Right ventricle myocardium superior (tissue), 1 donor: ENCODE measurements at regions of chr17 and their contacts with region 1.

Region 1: GRCh38 chr17:31524926-31525800 is 133.7 kb downstream of the RAB11FIP4 start:
- DNase-seq: peak; percentile 93
- ATAC-seq: peak; percentile 91

Region 2: DNA sequence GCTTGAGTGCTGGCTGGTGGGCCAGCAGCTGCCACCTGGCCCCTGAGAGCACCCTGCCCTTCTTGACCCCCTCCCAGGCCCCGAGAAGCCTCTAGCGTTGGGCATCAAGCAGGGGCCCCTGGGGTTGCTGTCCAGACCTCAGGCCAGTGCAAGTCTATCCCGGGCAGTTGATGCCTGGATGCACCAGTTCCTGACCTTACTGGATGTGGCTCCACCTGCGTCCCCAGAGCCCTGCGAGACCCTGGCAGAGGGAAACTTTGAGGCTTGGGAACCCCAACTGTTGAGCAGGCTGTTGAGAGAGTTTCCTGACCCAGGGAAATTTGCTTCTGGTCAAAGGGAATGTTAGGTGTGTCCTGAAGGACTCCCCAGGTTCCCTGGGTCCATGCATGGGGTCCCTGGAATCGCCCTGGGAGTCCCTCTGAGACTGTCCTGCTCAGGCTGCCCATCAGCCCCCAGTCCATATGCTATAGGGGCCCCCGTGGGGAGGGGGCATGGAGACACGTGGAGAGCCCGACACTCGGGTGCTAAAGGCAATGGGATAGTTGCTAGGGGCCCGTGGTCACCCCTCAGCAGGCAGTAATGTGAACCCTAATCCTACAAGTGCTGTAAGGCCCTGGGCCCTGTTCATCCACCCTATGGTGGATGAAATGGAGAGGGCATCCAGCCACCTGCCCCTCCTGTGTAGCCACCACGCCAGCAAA is 87.3 kb before region 1 on chr17:
- intact Hi-C with region 1: loop called (anchors 2 kb)
- DNase-seq: no peak
- ATAC-seq: peak; percentile 9

Region 3: DNA sequence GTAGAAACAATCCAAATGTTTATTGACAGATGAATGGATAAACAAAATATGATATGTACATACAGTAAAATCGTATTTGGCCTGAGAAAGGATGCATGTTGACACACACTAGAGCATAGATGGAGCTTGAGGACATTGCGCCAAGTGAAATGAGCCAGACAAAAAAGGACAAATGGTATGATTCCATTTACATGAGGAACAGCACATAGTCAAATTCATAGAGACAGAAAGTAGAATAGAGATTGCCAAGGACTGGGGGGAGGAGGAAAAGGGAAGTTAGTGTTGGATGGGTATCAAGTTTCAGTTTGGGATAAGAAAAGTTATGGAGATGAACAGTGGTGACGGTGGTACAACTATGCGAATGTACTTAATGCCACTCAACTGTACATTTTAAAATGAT is 285.9 kb after region 1 on chr17:
- intact Hi-C with region 1: no loop called
- DNase-seq: no peak
- ATAC-seq: no peak

Region 4: DNA sequence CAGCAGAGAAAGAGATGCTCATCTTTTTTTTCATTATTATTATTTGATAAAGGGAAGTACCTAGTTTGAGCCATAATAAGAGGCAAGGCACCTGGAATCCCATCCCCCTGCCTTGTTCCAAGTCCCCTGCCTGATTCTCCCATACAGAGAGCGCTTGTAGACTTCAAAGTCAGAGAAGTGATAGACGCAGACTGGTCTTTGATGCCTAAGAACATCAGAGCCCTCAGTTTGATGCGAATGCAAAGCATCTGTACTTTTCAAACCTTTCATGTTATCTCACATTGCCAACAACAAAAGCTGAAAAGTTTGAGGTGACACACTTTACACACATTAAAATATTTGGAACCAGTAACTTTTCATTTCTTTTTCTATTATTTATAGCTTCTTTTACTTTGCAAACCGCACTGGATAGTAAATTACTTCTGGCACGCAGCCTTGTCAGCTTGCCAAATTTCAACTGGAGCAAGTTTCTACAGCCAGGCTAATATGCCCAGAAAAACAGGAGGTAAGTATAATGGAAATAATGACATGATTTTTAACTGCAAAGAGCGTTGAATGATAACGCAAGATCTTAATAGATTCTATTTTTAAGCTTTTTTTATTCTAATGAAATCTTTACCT is 382.3 kb after region 1 on chr17:
- intact Hi-C with region 1: no loop called
- DNase-seq: no peak
- ATAC-seq: no peak